GM12878 (cell line): ENCODE measurements at regions of chr12 and their contacts with region 1.

Region 1: GRCh38 chr12:92145731-92146496 is at the start of gene BTG1:
- DNase-seq: peak; percentile 100
- ATAC-seq: peak; percentile 72
- H3K4me3 ChIP-seq: peak within 1 kb of the TSS; percentile 89
- H3K27ac ChIP-seq: peak within 1 kb of the TSS; percentile 94
- H3K4me1 ChIP-seq: peaks cover 8% of the 10 kb centered on the region
- H3K27me3 ChIP-seq: no peaks in the 10 kb centered on the region
- CTCF ChIP-seq: no peak
- EP300 ChIP-seq: no peak; a peak in 2 of 4 replicates
- POLR2A ChIP-seq: peak; percentile 97
- RAD21 ChIP-seq: 0 out of 2 replicates have a peak, but pooled peaks have one; percentile 5
- polyA plus RNA-seq, gene BTG1: 23.7 to 61.5 TPM

Region 2: GRCh38 chr12:91811481-91812287 is 334.2 kb before region 1 on chr12:
- CTCF ChIA-PET with region 1: interaction called, 29 read pairs
- POLR2A ChIA-PET with region 1: no interaction called
- RAD21 ChIA-PET with region 1: interaction called, 27 read pairs
- SMC1A ChIA-PET with region 1: interaction called, 14 read pairs
- in situ Hi-C with region 1: no loop called
- intact Hi-C with region 1: no loop called
- DNase-seq: peak; percentile 40
- ATAC-seq: peak; percentile 95
- H3K4me3 ChIP-seq: no peak overlapping the region
- H3K27ac ChIP-seq: no peak overlapping the region
- H3K4me1 ChIP-seq: no peaks in the 10 kb centered on the region
- H3K27me3 ChIP-seq: no peaks in the 10 kb centered on the region
- CTCF ChIP-seq: peak; percentile 68 to 86 (median 79)
- EP300 ChIP-seq: no peak
- POLR2A ChIP-seq: no peak
- RAD21 ChIP-seq: peak; percentile 87

Region 3: DNA sequence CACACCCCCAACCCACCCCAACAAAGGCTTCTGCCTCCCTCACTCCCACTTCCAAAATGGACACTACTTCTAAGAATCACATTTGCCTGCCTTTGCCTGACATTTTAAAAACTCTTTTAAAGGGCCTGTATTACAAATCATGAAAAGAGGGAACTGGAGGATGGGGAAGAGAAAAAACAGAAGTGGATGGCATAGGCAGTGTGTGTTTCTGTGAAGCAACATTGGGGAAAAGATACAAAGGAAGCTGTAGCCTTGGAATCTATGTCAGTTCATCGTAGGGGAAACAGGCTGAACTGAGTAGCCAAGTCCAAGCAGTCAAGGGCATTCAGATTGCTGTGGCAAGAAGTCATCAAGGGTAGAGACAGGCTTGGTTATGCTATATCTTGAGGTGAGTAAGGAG is 274.2 kb before region 1 on chr12:
- CTCF ChIA-PET with region 1: no interaction called
- POLR2A ChIA-PET with region 1: no interaction called
- RAD21 ChIA-PET with region 1: no interaction called
- SMC1A ChIA-PET with region 1: no interaction called
- in situ Hi-C with region 1: no loop called
- intact Hi-C with region 1: no loop called
- DNase-seq: no peak
- ATAC-seq: no peak
- H3K4me3 ChIP-seq: no peak overlapping the region
- H3K27ac ChIP-seq: no peak overlapping the region
- H3K4me1 ChIP-seq: no peaks in the 10 kb centered on the region
- H3K27me3 ChIP-seq: no peaks in the 10 kb centered on the region
- CTCF ChIP-seq: no peak
- EP300 ChIP-seq: no peak
- POLR2A ChIP-seq: no peak
- RAD21 ChIP-seq: no peak

Region 4: DNA sequence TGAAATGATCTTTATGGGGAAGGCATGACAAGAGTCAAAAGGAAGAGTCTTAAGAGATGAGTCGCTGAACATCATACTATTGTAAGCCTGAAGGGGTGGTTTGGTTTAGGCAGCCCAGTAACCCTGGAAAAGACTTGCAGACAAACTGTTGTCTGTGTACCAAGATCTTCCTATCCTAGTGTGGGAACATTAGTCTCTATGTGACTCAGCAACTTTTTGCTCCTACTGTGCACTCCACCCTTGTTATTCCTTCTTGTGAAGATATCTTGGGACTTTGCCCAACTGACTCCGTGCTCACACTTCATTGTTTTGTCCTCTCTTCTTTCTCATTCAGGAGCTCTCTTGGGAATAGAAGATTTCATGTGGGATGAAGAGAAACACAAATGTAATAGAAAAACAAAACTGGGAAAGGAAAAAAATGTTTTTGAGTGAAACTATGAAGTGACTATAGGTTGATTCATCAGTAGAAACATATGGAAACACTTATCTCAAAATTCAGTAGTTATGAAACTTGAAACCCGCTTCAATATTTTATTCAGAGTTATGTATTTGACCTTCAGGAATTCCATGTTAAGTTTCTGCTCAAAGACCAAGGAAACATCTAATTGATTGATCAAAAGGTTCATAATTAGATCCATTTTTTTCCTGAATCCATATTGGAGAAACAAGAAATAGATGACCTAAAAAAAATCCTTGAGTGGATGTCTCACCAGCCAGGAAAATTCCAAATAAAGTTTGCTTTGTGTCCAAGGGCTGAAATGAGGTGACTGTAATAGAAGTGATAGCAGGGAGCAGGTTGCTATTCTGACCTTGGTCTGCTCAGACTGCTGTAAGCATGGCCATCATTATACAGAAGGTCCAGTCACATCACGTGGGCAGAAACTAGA is 67.5 kb before region 1 on chr12:
- CTCF ChIA-PET with region 1: no interaction called
- POLR2A ChIA-PET with region 1: interaction called, 4 read pairs
- RAD21 ChIA-PET with region 1: interaction called, 12 read pairs
- SMC1A ChIA-PET with region 1: interaction called, 4 read pairs
- in situ Hi-C with region 1: no loop called
- intact Hi-C with region 1: no loop called
- DNase-seq: no peak
- ATAC-seq: peak; percentile 7
- H3K4me3 ChIP-seq: no peak overlapping the region
- H3K27ac ChIP-seq: no peak overlapping the region
- H3K4me1 ChIP-seq: peaks cover 36% of the 10 kb centered on the region
- H3K27me3 ChIP-seq: no peaks in the 10 kb centered on the region
- CTCF ChIP-seq: no peak
- EP300 ChIP-seq: no peak
- POLR2A ChIP-seq: no peak
- RAD21 ChIP-seq: no peak

Region 5: GRCh38 chr12:92185052-92185451 is 39.1 kb after region 1 on chr12:
- CTCF ChIA-PET with region 1: interaction called, 4 read pairs
- POLR2A ChIA-PET with region 1: interaction called, 4 read pairs
- RAD21 ChIA-PET with region 1: interaction called, 8 read pairs
- SMC1A ChIA-PET with region 1: interaction called, 15 read pairs
- in situ Hi-C with region 1: no loop called
- intact Hi-C with region 1: loop called (anchors 2 kb)
- DNase-seq: peak; percentile 80
- ATAC-seq: peak; percentile 81
- H3K4me3 ChIP-seq: no peak overlapping the region
- H3K27ac ChIP-seq: peak overlapping the region; percentile 77
- H3K4me1 ChIP-seq: peaks cover 28% of the 10 kb centered on the region
- H3K27me3 ChIP-seq: no peaks in the 10 kb centered on the region
- CTCF ChIP-seq: no peak
- EP300 ChIP-seq: peak; percentile 14 to 61; a peak in 1 of 4 replicates
- POLR2A ChIP-seq: no peak
- RAD21 ChIP-seq: peak; percentile 13; the same call in 1 of the 2 replicates

Region 6: GRCh38 chr12:92408072-92408900 is 262.4 kb after region 1 on chr12:
- CTCF ChIA-PET with region 1: interaction called, 12 read pairs
- POLR2A ChIA-PET with region 1: interaction called, 18 read pairs
- RAD21 ChIA-PET with region 1: interaction called, 54 read pairs
- SMC1A ChIA-PET with region 1: interaction called, 24 read pairs
- in situ Hi-C with region 1: loop called (anchors 5 kb)
- intact Hi-C with region 1: loop called (anchors 2 kb)
- DNase-seq: no peak
- ATAC-seq: peak; percentile 74
- H3K4me3 ChIP-seq: no peak overlapping the region
- H3K27ac ChIP-seq: peak overlapping the region; percentile 24
- H3K4me1 ChIP-seq: peaks cover 31% of the 10 kb centered on the region
- H3K27me3 ChIP-seq: no peaks in the 10 kb centered on the region
- CTCF ChIP-seq: peak; percentile 58 to 82 (median 72)
- EP300 ChIP-seq: no peak
- POLR2A ChIP-seq: no peak
- RAD21 ChIP-seq: peak; percentile 94

Region 7: GRCh38 chr12:92546635-92547348 is 400.9 kb after region 1 on chr12:
- CTCF ChIA-PET with region 1: interaction called, 4 read pairs
- POLR2A ChIA-PET with region 1: interaction called, 4 read pairs
- RAD21 ChIA-PET with region 1: interaction called, 16 read pairs
- SMC1A ChIA-PET with region 1: interaction called, 3 read pairs
- in situ Hi-C with region 1: no loop called
- intact Hi-C with region 1: no loop called
- DNase-seq: no peak
- ATAC-seq: peak; percentile 60
- H3K4me3 ChIP-seq: no peak overlapping the region
- H3K27ac ChIP-seq: no peak overlapping the region
- H3K4me1 ChIP-seq: peaks cover 43% of the 10 kb centered on the region
- H3K27me3 ChIP-seq: no peaks in the 10 kb centered on the region
- CTCF ChIP-seq: no peak
- EP300 ChIP-seq: peak in 1 of 2 experiments; percentile 52; a peak in 2 of 4 replicates
- POLR2A ChIP-seq: no peak
- RAD21 ChIP-seq: no peak

Region 8: DNA sequence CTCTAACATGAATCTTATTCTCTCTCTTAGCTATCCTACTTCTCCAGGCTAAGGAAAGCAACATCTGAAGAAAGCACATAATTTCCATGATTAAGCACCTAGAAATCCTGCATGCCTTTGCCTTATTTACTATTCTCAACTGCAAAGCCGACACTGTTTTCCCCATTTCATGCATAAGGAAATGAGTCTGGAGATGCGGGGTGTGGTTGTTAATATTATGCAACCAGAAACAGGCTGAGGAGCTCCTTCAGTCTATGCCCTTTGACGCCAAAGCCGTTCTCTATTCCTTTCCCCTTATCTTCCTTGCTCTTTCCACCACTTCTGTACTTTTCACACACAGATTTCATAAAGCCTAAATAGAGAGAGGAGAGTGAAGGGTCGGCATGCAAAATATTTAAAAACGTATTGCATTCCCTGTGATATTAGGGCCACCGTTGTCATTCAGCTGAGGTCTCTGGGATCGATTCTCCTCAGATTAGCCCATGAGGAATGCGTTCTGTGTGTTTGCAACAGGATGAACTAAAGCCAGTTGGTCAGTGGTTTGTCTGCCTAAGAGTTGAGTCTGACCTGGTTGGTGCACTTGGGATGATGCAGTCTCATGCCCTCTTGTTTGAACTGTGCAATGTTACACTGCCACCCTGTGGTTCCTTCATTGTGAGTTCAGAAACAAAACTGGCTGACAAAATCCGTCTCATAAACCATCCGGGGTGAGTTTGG is 503.8 kb after region 1 on chr12:
- CTCF ChIA-PET with region 1: no interaction called
- POLR2A ChIA-PET with region 1: no interaction called
- RAD21 ChIA-PET with region 1: interaction called, 3 read pairs
- SMC1A ChIA-PET with region 1: interaction called, 3 read pairs
- in situ Hi-C with region 1: no loop called
- intact Hi-C with region 1: loop called (anchors 5 kb)
- DNase-seq: peak; percentile 67
- ATAC-seq: peak; percentile 98
- H3K4me3 ChIP-seq: no peak overlapping the region
- H3K27ac ChIP-seq: no peak overlapping the region
- H3K4me1 ChIP-seq: no peaks in the 10 kb centered on the region
- H3K27me3 ChIP-seq: no peaks in the 10 kb centered on the region
- CTCF ChIP-seq: peak; percentile 72 to 85 (median 76); a peak in 5 of 6 replicates
- EP300 ChIP-seq: no peak
- POLR2A ChIP-seq: no peak
- RAD21 ChIP-seq: peak; percentile 96